Aorta (tissue), 5 donors: ENCODE measurements at regions of chr21 and their contacts with region 1.

Region 1: DNA sequence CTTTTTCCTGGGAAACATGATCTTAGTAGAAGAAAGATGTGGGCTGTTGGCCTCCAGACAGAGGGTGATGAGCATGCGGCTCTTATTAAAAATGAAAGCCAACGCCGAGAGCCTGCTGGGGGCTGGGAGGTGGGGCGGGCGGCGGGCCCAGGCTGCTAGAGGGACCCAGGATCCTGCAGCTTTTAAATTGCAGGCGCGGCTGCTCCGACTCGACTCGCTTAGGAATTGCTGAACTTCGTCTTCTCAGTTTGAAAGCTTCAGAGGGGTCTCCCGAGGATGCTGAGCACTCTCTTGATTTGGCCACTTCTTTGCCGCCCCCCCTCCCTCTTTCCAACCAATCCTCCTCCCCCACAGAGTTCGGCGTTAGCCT is 1.2 kb downstream of the AGPAT3 start:
- DNase-seq: peak in 1 of 2 donors; percentile 79
- ATAC-seq: peak; percentile 52
- H3K4me3 ChIP-seq: peak overlapping the region; percentile 79 to 96
- H3K27ac ChIP-seq: no peak overlapping the region
- H3K4me1 ChIP-seq: no peaks in the 10 kb centered on the region
- H3K27me3 ChIP-seq: no peaks in the 10 kb centered on the region

Region 2: GRCh38 chr21:42534421-42535378 is 1331.5 kb before region 1 on chr21:
- intact Hi-C with region 1: no loop called
- DNase-seq: peak in 1 of 2 donors; percentile 86
- ATAC-seq: no peak
- H3K4me3 ChIP-seq: no peak overlapping the region
- H3K27ac ChIP-seq: no peak overlapping the region
- H3K4me1 ChIP-seq: no peaks in the 10 kb centered on the region
- H3K27me3 ChIP-seq: no peaks in the 10 kb centered on the region

Region 3: DNA sequence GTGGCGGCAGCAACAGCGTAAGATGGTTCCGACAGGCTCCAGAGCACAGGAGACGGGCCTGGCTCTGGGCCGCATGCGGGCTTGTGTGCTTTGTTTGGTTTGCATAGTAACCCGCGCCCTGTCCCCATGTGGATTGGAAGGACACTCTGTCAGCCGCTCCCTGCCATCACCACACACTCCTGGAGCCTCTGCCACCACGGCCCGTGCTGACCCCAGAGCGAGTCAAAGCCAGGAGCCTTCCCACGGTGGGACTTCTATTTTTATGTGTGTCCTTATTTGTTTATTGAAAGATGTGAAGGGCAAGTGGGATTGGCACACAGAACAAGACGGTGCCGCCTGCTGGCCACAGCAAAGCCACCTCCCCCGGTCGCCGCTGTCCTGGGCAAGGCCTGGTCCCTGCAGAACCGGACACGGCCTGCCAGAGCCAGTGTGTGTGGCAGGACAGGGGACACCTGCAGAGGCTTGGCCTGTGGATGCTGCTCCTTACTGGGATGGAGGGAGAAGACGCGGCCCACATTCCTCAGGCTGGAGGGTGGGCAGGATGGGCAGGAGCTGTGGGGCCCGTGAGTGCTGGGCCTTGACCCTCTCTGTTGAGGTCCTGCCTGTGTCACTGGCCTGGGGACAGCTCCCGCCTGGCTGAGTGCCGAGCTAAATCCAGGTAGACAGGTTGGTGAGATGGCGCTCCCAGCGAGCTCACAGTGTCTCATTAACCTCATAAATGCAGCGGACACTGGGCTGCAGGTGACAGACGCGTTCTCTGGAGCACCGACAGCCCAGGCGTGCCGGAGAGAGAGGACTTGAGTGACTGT is 63.2 kb after region 1 on chr21:
- intact Hi-C with region 1: loop called in 1 of 2 experiments (anchors 5 kb)
- DNase-seq: no peak
- ATAC-seq: no peak
- H3K4me3 ChIP-seq: no peak overlapping the region
- H3K27ac ChIP-seq: no peak overlapping the region
- H3K4me1 ChIP-seq: no peaks in the 10 kb centered on the region
- H3K27me3 ChIP-seq: no peaks in the 10 kb centered on the region